SK-MEL-5 (cell line): ENCODE measurements at regions of chr9 and their contacts with region 1.

Region 1: DNA sequence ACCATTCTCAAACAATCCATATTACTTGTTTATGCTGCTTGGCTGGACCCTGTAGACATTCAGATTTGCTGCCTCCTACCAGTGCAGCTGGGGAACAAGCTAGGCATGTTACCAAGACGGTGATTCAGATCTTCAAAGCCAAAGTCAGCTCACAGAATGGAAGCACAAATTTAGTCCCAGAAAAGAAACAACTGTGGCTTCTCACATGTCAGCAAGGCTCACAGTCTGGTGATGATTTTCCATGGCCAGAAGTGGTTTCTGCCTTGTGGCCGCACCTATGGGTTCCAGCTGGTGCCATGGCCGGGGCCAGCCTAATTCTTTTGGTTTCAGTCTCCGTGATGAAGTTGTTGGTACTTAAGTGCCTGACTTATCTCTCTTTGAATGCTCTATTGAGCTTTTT is 182.2 kb downstream of the TMC1 start:
- DNase-seq: no peak

Region 2: GRCh38 chr9:72592502-72593403 is 110.8 kb before region 1 on chr9:
- in situ Hi-C with region 1: loop called (anchors 25 kb)
- DNase-seq: peak; percentile 73